ENCODE measurements at regions of chr7 and their contacts with region 1.

Region 1: DNA sequence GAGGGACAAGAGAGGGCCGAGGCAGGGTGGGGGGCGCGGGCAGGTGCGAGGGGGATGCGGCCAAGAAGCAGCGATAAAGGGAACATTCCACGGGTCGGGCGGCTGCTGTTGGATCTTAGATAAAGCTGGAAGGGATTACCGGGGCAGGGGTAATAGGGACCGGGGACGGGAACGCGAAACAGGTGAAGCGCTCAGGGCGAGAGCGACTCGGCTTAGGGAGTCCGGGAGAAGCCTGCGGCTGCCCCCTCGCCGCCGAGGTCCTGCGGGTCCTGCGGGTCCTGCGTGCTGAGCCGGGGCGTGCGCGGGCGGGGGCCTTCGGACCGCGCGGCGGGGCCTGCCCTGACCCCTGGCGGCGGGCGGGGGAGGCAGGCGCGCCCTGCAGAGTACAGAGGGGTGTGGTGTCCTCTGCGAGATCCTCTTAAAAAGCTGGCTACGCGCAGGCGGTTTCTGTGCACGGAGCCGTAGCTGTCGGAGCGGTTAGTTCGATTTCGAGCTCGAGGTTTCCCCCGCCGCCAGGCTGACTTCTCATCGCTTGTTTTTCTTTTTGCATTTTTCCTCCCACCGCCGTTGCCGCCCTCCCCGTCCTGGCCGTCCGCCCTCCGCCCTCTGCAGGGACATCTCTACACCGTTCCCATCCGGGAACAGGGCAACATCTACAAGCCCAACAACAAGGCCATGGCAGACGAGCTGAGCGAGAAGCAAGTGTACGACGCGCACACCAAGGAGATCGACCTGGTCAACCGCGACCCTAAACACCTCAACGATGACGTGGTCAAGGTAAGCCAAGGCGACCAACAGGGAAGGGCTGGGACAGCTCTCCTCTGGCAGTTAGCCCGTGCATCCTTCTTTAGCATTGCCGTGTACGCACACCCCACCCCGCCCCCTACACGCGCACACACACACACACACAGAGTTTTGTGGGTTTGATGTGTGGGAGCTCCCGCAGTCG is 1.4 kb downstream of the CAV1 start:
- DNase-seq: peak; percentile 70 to 92
- H3K4me3 ChIP-seq: peak overlapping the region; percentile 69 to 72 (median 70)
- H3K27ac ChIP-seq: peak overlapping the region; percentile 87 to 94 (median 90)
- H3K4me1 ChIP-seq: peaks cover 0 to 52% (median 25%) of the 10 kb centered on the region in 4 donors
- H3K27me3 ChIP-seq: peaks cover 0 to 31% (median 11%) of the 10 kb centered on the region in 3 donors
- CTCF ChIP-seq: peak in 5 of 7 experiments; percentile 26 to 94 (median 76)
- EP300 ChIP-seq: no peak
- POLR2A ChIP-seq: no peak

Region 2: DNA sequence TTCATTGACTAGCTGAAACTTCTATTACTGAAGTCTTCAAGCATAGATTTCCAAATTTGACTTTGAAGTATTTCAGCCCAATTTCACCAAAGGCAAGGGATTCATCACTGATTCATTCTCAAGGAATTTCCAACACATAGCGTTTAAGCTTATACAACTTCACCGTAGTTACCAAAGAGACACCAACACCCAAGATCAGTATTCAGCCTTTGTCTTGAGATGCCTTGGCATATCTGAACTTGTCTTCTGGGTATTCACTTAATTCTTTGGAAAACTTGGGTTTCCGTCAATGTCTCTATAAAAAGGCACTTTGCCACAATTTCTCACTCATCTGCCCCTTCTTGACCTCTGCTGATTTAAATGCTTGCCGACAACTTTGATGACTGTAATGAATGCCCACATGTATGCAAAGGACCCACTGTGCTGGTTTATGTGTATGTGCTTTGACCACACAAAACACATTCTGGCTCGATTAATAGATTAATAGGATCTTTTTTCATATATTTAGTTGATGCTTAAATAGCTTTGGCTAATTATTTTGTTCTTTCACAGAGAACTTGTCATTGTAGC is 266.2 kb before region 1 on chr7:
- intact Hi-C with region 1: loop called (anchors 5 kb)
- DNase-seq: no peak
- H3K4me3 ChIP-seq: no peak overlapping the region
- H3K27ac ChIP-seq: no peak overlapping the region
- H3K4me1 ChIP-seq: peaks cover 0 to 8% (median 4%) of the 10 kb centered on the region in 4 donors
- H3K27me3 ChIP-seq: no peaks in the 10 kb centered on the region
- CTCF ChIP-seq: no peak
- EP300 ChIP-seq: no peak
- POLR2A ChIP-seq: no peak

Region 3: DNA sequence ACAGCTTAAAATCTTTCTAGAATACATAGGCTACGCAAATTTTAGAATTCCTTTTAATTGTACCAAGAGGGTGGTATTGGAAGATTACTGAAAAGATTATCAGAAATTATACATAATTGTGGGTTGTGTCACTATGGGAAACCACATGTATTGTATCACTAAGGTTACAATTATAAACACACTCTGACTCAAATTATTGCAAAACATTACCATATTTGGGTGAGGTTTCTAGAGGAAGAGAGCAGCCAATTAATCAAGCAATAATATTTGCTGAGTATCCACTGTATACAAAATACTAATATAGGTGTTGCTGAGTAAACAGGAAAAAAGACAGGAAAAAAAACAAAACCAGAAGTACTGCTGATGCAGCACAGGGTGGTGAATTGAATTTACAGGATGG is 333.1 kb after region 1 on chr7:
- intact Hi-C with region 1: no loop called
- DNase-seq: no peak
- H3K4me3 ChIP-seq: no peak overlapping the region
- H3K27ac ChIP-seq: no peak overlapping the region
- H3K4me1 ChIP-seq: peaks cover 6 to 26% (median 14%) of the 10 kb centered on the region in 4 donors
- H3K27me3 ChIP-seq: no peaks in the 10 kb centered on the region
- CTCF ChIP-seq: no peak
- EP300 ChIP-seq: no peak
- POLR2A ChIP-seq: no peak

Measured in stomach (tissue), 19 donors.